Activated T-helper 1 cell treated with anti-CD3 and anti-CD28 coated beads, Interleukin-12 subunit alpha, Interleukin-12 subunit beta, Interleukin-2, Interleukin-4 antibody, amounts not matched to agents 30 ng/mL and 10 ng/mL and 1 ng/mL, durations not matched to agents 14 hours and 24 hours and 36 hours (primary cell): ENCODE measurements at regions of chr4 and their contacts with region 1.

Region 1: GRCh38 chr4:6134612-6135220 is 65.6 kb downstream of the JAKMIP1 start:
- DNase-seq: peak; percentile 46
- H3K4me3 Mint-ChIP-seq: no peak overlapping the region
- H3K27ac Mint-ChIP-seq: no peak overlapping the region
- H3K4me1 Mint-ChIP-seq: peaks cover 20% of the 10 kb centered on the region
- H3K27me3 Mint-ChIP-seq: no peaks in the 10 kb centered on the region

Region 2: GRCh38 chr4:6063684-6064083 is 71.0 kb before region 1 on chr4:
- intact Hi-C with region 1: no loop called
- DNase-seq: no peak
- H3K4me3 Mint-ChIP-seq: no peak overlapping the region
- H3K27ac Mint-ChIP-seq: no peak overlapping the region
- H3K4me1 Mint-ChIP-seq: no peaks in the 10 kb centered on the region
- H3K27me3 Mint-ChIP-seq: no peaks in the 10 kb centered on the region

Region 3: DNA sequence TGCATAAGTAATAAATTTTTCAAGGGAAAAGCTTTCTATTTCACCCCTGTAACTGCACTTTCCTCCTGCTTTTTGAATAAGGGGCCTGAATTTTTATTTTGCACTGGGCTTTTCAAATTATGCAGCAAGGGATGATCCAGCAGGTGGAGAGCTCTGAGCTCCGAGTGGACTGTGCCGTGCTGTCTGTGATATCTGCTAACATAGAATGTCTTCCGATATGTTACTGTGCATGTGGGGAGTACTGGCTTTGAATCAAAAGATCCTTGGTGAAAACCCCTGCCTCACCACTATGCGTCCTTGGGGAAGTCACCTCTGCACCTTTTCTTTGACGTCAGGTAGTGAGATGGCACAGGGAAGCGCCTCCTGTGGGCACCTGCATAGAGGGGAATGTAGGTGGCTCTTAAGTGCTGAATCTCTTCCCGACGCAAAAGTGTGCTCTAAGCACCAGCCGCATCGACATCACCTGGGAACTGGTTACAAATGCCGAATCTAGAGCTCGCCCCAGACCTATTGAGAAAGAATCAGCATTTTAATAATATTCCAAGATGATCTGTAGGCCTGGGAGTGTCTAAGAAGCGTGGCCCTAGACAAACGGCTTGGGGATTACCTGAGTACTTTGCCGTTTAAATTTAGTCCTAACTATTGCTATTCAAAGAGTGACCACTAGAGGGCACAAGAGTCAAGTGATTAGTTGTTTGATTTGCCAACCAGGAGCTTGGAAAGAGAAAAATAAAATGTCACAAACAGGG is 115.7 kb after region 1 on chr4:
- intact Hi-C with region 1: loop called (anchors 1 kb)
- DNase-seq: peak; percentile 25
- H3K4me3 Mint-ChIP-seq: no peak overlapping the region
- H3K27ac Mint-ChIP-seq: no peak overlapping the region
- H3K4me1 Mint-ChIP-seq: peaks cover 8% of the 10 kb centered on the region
- H3K27me3 Mint-ChIP-seq: peaks cover 36% of the 10 kb centered on the region